Transverse colon (tissue), 4 donors: ENCODE measurements at regions of chr17 and their contacts with region 1.

Region 1: GRCh38 chr17:32664936-32665583 is 178.3 kb downstream of the CDK5R1 start:
- DNase-seq: no peak
- H3K4me3 ChIP-seq: no peak overlapping the region
- H3K27ac ChIP-seq: no peak overlapping the region
- H3K4me1 ChIP-seq: no peaks in the 10 kb centered on the region
- H3K27me3 ChIP-seq: no peaks in the 10 kb centered on the region
- CTCF ChIP-seq: no peak
- EP300 ChIP-seq: no peak
- POLR2A ChIP-seq: no peak

Region 2: GRCh38 chr17:30921544-30922196 is 1743.4 kb before region 1 on chr17 and contains the start of gene ADAP2:
- in situ Hi-C with region 1: no loop called
- intact Hi-C with region 1: loop called (anchors 10 kb)
- DNase-seq: peak; percentile 77
- H3K4me3 ChIP-seq: peak within 1 kb of the TSS; percentile 21 to 64 (median 48)
- H3K27ac ChIP-seq: peak within 1 kb of the TSS; percentile 33 to 60 (median 40)
- H3K4me1 ChIP-seq: peaks cover 0 to 17% (median 13%) of the 10 kb centered on the region in 4 donors
- H3K27me3 ChIP-seq: peaks cover 61% of the 10 kb centered on the region
- CTCF ChIP-seq: no peak
- EP300 ChIP-seq: no peak
- POLR2A ChIP-seq: peak; percentile 8
- total RNA-seq, gene ADAP2: 8.6 to 12.3 (median 11.9) TPM in 3 of 4 donors, not detected in the other

Region 3: GRCh38 chr17:32479074-32479617 is 185.9 kb before region 1 on chr17:
- in situ Hi-C with region 1: loop called in 1 of 4 experiments (anchors 10 kb)
- intact Hi-C with region 1: no loop called
- DNase-seq: no peak
- H3K4me3 ChIP-seq: no peak overlapping the region
- H3K27ac ChIP-seq: no peak overlapping the region
- H3K4me1 ChIP-seq: peaks cover 0 to 7% (median 0%) of the 10 kb centered on the region in 4 donors
- H3K27me3 ChIP-seq: no peaks in the 10 kb centered on the region
- CTCF ChIP-seq: no peak
- EP300 ChIP-seq: no peak
- POLR2A ChIP-seq: no peak